B cell (primary cell): ENCODE measurements at regions of chr16 and their contacts with region 1.

Region 1: GRCh38 chr16:56866943-56867830 is 2.2 kb downstream of the SLC12A3 start:
- DNase-seq: peak; percentile 81
- ATAC-seq: no peak
- H3K4me3 ChIP-seq: no peak overlapping the region
- H3K4me3 Mint-ChIP-seq: peak overlapping the region; percentile 55
- H3K27ac ChIP-seq: no peak overlapping the region
- H3K27ac Mint-ChIP-seq: peak overlapping the region; percentile 69
- H3K4me1 ChIP-seq: peaks cover 21 to 59% of the 10 kb centered on the region in 2 donors
- H3K4me1 Mint-ChIP-seq: peaks cover 37% of the 10 kb centered on the region
- H3K27me3 ChIP-seq: no peaks in the 10 kb centered on the region
- H3K27me3 Mint-ChIP-seq: no peaks in the 10 kb centered on the region
- CTCF ChIP-seq: peak; percentile 89

Region 2: GRCh38 chr16:56673921-56674320 is 193.3 kb before region 1 on chr16:
- CTCF ChIA-PET with region 1: no interaction called
- POLR2A ChIA-PET with region 1: no interaction called
- intact Hi-C with region 1: no loop called
- DNase-seq: peak; percentile 47
- ATAC-seq: peak; percentile 41
- H3K4me3 ChIP-seq: no peak overlapping the region
- H3K4me3 Mint-ChIP-seq: no peak overlapping the region
- H3K27ac ChIP-seq: no peak overlapping the region
- H3K27ac Mint-ChIP-seq: no peak overlapping the region
- H3K4me1 ChIP-seq: peaks cover 16 to 17% of the 10 kb centered on the region in 2 donors
- H3K4me1 Mint-ChIP-seq: peaks cover 15% of the 10 kb centered on the region
- H3K27me3 ChIP-seq: peaks cover 0 to 57% (median 26%) of the 10 kb centered on the region in 4 experiments
- H3K27me3 Mint-ChIP-seq: peaks cover 69% of the 10 kb centered on the region
- CTCF ChIP-seq: peak; percentile 39

Region 3: DNA sequence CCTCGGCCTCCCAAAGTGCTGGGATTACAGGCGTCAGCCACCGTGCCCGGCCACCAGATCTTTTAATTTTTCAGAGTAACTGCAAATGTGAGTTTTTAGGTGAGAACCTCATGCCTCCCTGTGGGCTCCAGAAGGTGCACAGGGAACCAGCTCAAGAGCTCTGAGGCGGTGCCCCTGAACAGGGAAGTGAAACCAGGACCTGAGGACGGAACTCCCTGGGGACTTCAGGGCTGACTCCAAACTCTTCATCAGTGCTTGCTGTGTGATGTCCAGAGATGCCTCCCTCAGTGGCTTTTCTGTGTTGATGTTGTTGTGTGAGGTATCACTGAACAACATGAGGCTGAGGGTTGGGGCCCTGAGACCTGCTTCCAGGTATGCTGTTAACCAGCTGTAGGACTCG is 21.6 kb after region 1 on chr16:
- CTCF ChIA-PET with region 1: interaction called, 23 read pairs
- POLR2A ChIA-PET with region 1: interaction called, 4 read pairs
- intact Hi-C with region 1: loop called (anchors 1 kb)
- DNase-seq: peak; percentile 87
- ATAC-seq: peak; percentile 96
- H3K4me3 ChIP-seq: no peak overlapping the region
- H3K4me3 Mint-ChIP-seq: peak overlapping the region; percentile 53
- H3K27ac ChIP-seq: peak overlapping the region in 1 of 2 donors; percentile 39
- H3K27ac Mint-ChIP-seq: peak overlapping the region; percentile 79
- H3K4me1 ChIP-seq: peaks cover 6 to 18% of the 10 kb centered on the region in 2 donors
- H3K4me1 Mint-ChIP-seq: peaks cover 18% of the 10 kb centered on the region
- H3K27me3 ChIP-seq: no peaks in the 10 kb centered on the region
- H3K27me3 Mint-ChIP-seq: no peaks in the 10 kb centered on the region
- CTCF ChIP-seq: no peak

Region 4: DNA sequence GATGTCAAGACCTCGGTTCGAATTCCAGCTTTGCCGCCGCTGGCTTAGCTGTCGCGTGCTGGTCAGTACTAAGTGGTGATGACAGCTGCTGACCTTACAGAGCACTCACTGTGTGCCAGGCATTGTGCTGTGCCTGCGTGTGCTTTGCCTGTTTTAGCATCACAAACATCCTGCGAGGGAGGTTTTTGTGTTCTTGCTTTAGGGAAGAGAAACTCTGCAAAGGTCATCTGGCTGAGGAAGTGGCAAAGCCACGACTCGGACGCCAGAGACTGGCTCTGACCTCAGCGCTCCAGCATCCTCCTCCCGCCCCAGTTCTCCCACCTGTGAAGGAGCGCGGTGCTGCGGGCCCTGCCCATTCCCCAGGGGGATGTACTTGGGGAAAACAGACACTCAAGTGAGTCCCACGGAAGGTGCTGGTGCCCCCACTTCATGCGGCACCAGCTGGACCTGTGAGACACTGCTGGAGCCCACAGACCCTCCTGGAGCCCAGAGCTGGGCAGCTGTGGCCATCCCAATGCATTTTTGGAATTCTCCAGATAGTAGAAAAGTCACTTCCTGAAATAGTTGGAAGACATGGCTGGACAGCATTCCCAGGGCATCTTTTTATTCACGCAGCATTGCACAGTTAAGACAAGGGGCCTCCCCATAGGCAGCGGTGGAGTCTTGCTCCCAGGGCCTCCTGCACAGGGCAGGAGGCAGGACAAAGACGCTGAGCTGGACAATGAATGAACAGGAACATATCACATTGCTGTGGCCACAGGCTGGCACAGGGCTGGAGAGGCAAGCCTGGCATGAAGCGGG is 44.8 kb after region 1 on chr16:
- CTCF ChIA-PET with region 1: interaction called, 15 read pairs
- POLR2A ChIA-PET with region 1: interaction called, 5 read pairs
- intact Hi-C with region 1: loop called (anchors 5 kb)
- DNase-seq: peak; percentile 87
- ATAC-seq: peak; percentile 87
- H3K4me3 ChIP-seq: peak overlapping the region in 3 of 5 experiments; percentile 12 to 48 (median 14)
- H3K4me3 Mint-ChIP-seq: peak overlapping the region; percentile 73
- H3K27ac ChIP-seq: peak overlapping the region; percentile 86 to 97
- H3K27ac Mint-ChIP-seq: peak overlapping the region; percentile 99
- H3K4me1 ChIP-seq: peaks cover 54 to 69% of the 10 kb centered on the region in 2 donors
- H3K4me1 Mint-ChIP-seq: peaks cover 69% of the 10 kb centered on the region
- H3K27me3 ChIP-seq: no peaks in the 10 kb centered on the region
- H3K27me3 Mint-ChIP-seq: no peaks in the 10 kb centered on the region
- CTCF ChIP-seq: no peak

Region 5: DNA sequence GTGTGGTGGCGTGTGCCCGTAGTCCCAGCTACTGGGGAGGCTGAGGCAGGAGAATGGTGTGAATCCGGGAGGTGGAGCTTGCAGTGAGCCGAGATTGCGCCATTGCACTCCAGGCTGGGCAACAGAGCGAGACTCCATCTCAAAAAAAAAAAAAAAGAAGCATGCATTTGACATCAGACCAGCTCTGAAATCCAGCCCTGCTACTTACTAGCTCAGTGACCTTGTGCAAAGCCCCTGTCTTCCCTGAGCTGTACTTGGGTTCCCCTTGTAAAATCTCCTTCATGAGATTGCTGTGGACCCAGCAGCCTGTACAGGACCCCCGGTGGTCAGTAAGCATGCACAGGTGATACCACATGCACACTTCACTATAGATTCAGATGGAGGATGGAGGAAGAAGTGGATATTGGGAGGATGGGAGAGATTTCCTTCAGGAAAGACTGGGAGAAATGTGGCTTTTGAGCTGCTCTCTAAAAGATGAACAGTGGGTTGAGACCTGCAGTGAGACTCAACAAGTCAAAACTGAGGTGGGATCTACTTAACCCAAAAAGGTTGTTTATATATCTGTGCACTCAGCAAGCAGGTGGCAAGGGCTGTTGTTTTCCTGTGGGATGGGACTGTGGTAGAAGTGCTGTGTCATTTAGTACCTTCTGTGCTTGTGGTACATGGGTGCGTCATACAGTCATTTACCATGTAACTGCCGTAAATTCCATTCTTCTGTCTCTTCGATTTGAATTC is 71.4 kb after region 1 on chr16:
- CTCF ChIA-PET with region 1: interaction called, 140 read pairs
- POLR2A ChIA-PET with region 1: interaction called, 68 read pairs
- intact Hi-C with region 1: no loop called
- DNase-seq: no peak
- ATAC-seq: peak; percentile 22
- H3K4me3 ChIP-seq: no peak overlapping the region
- H3K4me3 Mint-ChIP-seq: peak overlapping the region; percentile 80
- H3K27ac ChIP-seq: peak overlapping the region in 1 of 2 donors; percentile 24
- H3K27ac Mint-ChIP-seq: peak overlapping the region; percentile 78
- H3K4me1 ChIP-seq: peaks cover 74 to 82% of the 10 kb centered on the region in 2 donors
- H3K4me1 Mint-ChIP-seq: peaks cover 79% of the 10 kb centered on the region
- H3K27me3 ChIP-seq: no peaks in the 10 kb centered on the region
- H3K27me3 Mint-ChIP-seq: no peaks in the 10 kb centered on the region
- CTCF ChIP-seq: no peak

Region 6: DNA sequence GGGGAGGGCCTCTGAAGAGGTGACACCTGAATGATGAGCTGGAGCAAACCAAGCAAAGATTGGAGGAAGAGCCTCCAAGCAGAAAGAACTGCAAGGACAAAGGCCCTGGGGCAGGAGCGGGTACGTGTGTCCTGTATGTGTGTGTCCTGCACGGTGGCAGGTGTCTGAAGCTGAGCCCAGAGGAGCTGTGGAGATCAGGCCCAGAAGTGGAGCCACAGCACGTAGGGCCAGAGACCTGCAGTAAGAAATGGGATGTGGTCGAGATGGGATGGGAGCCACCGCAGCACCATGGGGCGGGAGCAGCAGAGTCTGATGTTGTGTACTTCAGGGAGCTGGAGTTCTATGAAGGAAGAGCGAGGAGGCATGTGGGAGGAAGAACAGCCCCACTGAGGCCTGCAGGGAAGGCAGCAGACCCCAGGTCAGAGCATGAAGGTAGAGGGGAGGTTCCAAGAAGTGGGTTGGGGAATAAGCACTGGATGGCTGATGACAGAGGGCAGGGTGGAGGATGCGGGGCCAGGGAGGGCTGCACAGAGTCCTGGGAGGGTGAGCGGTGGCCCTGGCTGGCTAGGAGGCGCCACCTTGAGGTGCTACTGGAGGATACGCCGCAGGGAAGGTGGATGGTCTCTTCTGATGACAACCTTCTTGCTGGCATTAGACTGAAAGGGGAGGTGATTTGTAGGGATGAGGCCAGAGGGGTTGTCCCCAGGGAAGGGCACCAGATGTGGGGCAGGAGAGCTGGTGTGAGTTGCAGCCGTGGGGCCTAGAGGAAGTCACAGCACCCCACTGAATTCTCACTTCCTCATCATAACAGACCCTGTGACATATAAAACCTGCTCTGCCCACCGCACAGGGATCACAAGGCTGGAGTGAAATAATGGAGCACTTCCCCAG is 83.9 kb after region 1 on chr16:
- CTCF ChIA-PET with region 1: interaction called, 118 read pairs
- POLR2A ChIA-PET with region 1: interaction called, 6 read pairs
- intact Hi-C with region 1: loop called (anchors 1 kb)
- DNase-seq: peak; percentile 92
- ATAC-seq: peak; percentile 84
- H3K4me3 ChIP-seq: peak overlapping the region in 1 of 5 experiments; percentile 1
- H3K4me3 Mint-ChIP-seq: peak overlapping the region; percentile 68
- H3K27ac ChIP-seq: peak overlapping the region; percentile 42 to 58
- H3K27ac Mint-ChIP-seq: peak overlapping the region; percentile 83
- H3K4me1 ChIP-seq: peaks cover 24 to 26% of the 10 kb centered on the region in 2 donors
- H3K4me1 Mint-ChIP-seq: peaks cover 41% of the 10 kb centered on the region
- H3K27me3 ChIP-seq: no peaks in the 10 kb centered on the region
- H3K27me3 Mint-ChIP-seq: no peaks in the 10 kb centered on the region
- CTCF ChIP-seq: peak; percentile 49

Region 7: GRCh38 chr16:57141822-57142631 is 274.8 kb after region 1 on chr16:
- CTCF ChIA-PET with region 1: no interaction called
- POLR2A ChIA-PET with region 1: interaction called, 10 read pairs
- intact Hi-C with region 1: no loop called
- DNase-seq: peak; percentile 68
- ATAC-seq: peak; percentile 79
- H3K4me3 ChIP-seq: no peak overlapping the region
- H3K4me3 Mint-ChIP-seq: peak overlapping the region; percentile 79
- H3K27ac ChIP-seq: peak overlapping the region in 1 of 2 donors; percentile 46
- H3K27ac Mint-ChIP-seq: peak overlapping the region; percentile 75
- H3K4me1 ChIP-seq: peaks cover 35 to 43% of the 10 kb centered on the region in 2 donors
- H3K4me1 Mint-ChIP-seq: peaks cover 42% of the 10 kb centered on the region
- H3K27me3 ChIP-seq: no peaks in the 10 kb centered on the region
- H3K27me3 Mint-ChIP-seq: no peaks in the 10 kb centered on the region
- CTCF ChIP-seq: no peak

Region 8: GRCh38 chr16:57167953-57168352 is 300.8 kb after region 1 on chr16:
- CTCF ChIA-PET with region 1: no interaction called
- POLR2A ChIA-PET with region 1: no interaction called
- intact Hi-C with region 1: loop called (anchors 5 kb)
- DNase-seq: peak; percentile 73
- ATAC-seq: peak; percentile 60
- H3K4me3 ChIP-seq: no peak overlapping the region
- H3K4me3 Mint-ChIP-seq: no peak overlapping the region
- H3K27ac ChIP-seq: no peak overlapping the region
- H3K27ac Mint-ChIP-seq: no peak overlapping the region
- H3K4me1 ChIP-seq: no peaks in the 10 kb centered on the region
- H3K4me1 Mint-ChIP-seq: peaks cover 8% of the 10 kb centered on the region
- H3K27me3 ChIP-seq: no peaks in the 10 kb centered on the region
- H3K27me3 Mint-ChIP-seq: no peaks in the 10 kb centered on the region
- CTCF ChIP-seq: peak; percentile 73